ENCODE measurements at regions of chr12 and their contacts with region 1.

Region 1: GRCh38 chr12:6752921-6753771 is at the start of gene MLF2:
- DNase-seq: peak; percentile 99
- H3K4me3 Mint-ChIP-seq: peak within 1 kb of the TSS; percentile 89
- H3K27ac Mint-ChIP-seq: peak within 1 kb of the TSS; percentile 97
- H3K4me1 Mint-ChIP-seq: peaks cover 39% of the 10 kb centered on the region
- H3K27me3 Mint-ChIP-seq: peaks cover 28% of the 10 kb centered on the region

Region 2: GRCh38 chr12:6773590-6774351 is 20.6 kb after region 1 on chr12:
- CTCF ChIA-PET with region 1: interaction called, 37 read pairs
- DNase-seq: no peak
- H3K4me3 Mint-ChIP-seq: peak overlapping the region; percentile 59
- H3K27ac Mint-ChIP-seq: no peak overlapping the region
- H3K4me1 Mint-ChIP-seq: peaks cover 59% of the 10 kb centered on the region
- H3K27me3 Mint-ChIP-seq: peaks cover 99% of the 10 kb centered on the region

Region 3: GRCh38 chr12:6792522-6793201 is 39.5 kb after region 1 on chr12:
- CTCF ChIA-PET with region 1: interaction called, 20 read pairs
- DNase-seq: peak; percentile 78
- H3K4me3 Mint-ChIP-seq: peak overlapping the region; percentile 84
- H3K27ac Mint-ChIP-seq: peak overlapping the region; percentile 92
- H3K4me1 Mint-ChIP-seq: peaks cover 64% of the 10 kb centered on the region
- H3K27me3 Mint-ChIP-seq: no peaks in the 10 kb centered on the region

Region 4: DNA sequence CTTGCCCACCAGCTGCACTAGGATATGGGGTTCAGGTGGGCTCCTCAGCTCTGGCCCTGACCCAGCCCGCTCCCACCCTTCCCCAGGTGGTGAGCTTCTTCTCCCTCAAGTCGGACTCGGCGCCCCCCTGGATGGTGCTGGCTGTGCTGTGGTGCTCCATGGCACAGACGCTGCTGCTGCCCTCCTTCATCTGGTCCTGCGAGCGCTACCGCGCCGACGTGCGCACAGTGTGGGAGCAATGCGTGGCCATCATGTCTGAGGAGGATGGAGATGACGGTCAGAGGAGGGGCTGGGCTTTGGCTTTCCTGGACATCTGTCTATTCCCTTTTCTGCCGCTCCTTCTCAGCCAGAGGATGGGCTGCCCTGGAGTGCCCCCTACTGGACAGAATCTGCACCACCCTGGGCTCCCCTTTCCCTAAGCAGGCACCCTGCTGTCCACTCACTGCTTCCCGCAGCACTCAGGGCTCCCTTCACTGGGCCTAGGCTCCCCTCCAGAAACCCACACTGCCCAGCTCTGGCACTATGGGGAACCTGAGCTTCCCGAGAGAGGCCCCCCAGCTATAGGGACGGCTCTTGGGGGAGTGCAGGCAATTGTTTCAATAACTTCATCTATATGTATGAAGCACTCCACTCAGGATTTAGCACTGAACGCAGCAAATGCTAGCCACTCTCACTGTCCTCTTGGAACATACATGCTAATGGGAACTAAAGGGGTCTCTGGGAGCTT is 72.4 kb after region 1 on chr12:
- CTCF ChIA-PET with region 1: interaction called, 91 read pairs
- DNase-seq: peak; percentile 89
- H3K4me3 Mint-ChIP-seq: no peak overlapping the region
- H3K27ac Mint-ChIP-seq: no peak overlapping the region
- H3K4me1 Mint-ChIP-seq: peaks cover 38% of the 10 kb centered on the region
- H3K27me3 Mint-ChIP-seq: peaks cover 99% of the 10 kb centered on the region

Measured in activated naive CD4-positive, alpha-beta T cell treated with anti-CD3 and anti-CD28 coated beads, Interleukin-2, amount 10 ng/mL, durations not matched to agents 7 days and 5 days (primary cell).